ENCODE measurements at regions of chr4 and their contacts with region 1.

Region 1: GRCh38 chr4:39169426-39170185 is 12.7 kb upstream of the WDR19 start:
- DNase-seq: no peak
- H3K4me3 Mint-ChIP-seq: no peak overlapping the region
- H3K27ac Mint-ChIP-seq: no peak overlapping the region
- H3K4me1 Mint-ChIP-seq: peaks cover 14% of the 10 kb centered on the region
- H3K27me3 Mint-ChIP-seq: no peaks in the 10 kb centered on the region
- CTCF ChIP-seq: no peak

Region 2: DNA sequence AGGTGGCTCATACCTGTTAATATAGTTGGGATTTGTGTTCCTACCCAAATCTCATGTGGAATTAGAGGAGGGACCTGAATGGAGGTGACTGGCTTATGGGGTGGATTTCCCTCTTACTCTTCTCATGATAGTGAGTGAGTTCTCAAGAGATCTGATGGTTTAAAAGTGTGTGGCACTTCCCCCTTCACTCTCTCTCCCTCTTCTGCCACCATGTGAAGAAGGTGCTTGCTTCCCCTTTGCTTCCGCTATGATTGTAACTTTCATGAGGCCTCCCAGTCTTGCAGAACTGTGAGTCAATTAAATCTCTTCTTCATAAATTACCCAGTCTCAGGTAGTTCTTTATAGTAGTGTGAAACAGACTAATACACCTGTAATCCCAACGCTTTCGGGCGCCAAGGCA is 15.6 kb before region 1 on chr4:
- CTCF ChIA-PET with region 1: no interaction called
- POLR2A ChIA-PET with region 1: interaction called, 7 read pairs
- intact Hi-C with region 1: loop called (anchors 1 kb)
- DNase-seq: no peak
- H3K4me3 Mint-ChIP-seq: no peak overlapping the region
- H3K27ac Mint-ChIP-seq: no peak overlapping the region
- H3K4me1 Mint-ChIP-seq: no peaks in the 10 kb centered on the region
- H3K27me3 Mint-ChIP-seq: no peaks in the 10 kb centered on the region
- CTCF ChIP-seq: no peak

Region 3: GRCh38 chr4:39181905-39182638 is 12.5 kb after region 1 on chr4 and contains the start of gene WDR19:
- CTCF ChIA-PET with region 1: interaction called, 4 read pairs
- POLR2A ChIA-PET with region 1: interaction called, 12 read pairs
- intact Hi-C with region 1: no loop called
- DNase-seq: peak; percentile 100
- H3K4me3 Mint-ChIP-seq: no peak within 1 kb of the TSS
- H3K27ac Mint-ChIP-seq: no peak within 1 kb of the TSS
- H3K4me1 Mint-ChIP-seq: no peaks in the 10 kb centered on the region
- H3K27me3 Mint-ChIP-seq: no peaks in the 10 kb centered on the region
- CTCF ChIP-seq: peak; percentile 29
- total RNA-seq, gene WDR19: 32.5 and 39.6 TPM in 2 replicates